ENCODE measurements at regions of chr4 and their contacts with region 1.

Region 1: GRCh38 chr4:94488662-94489061 is 36.9 kb downstream of the PDLIM5 start:
- DNase-seq: peak; percentile 91
- ATAC-seq: peak; percentile 83
- H3K4me3 ChIP-seq: 0 out of 2 replicates have a peak overlapping the region, but pooled peaks have one; percentile 25
- H3K27ac ChIP-seq: peak overlapping the region; percentile 80
- H3K4me1 ChIP-seq: peaks cover 69% of the 10 kb centered on the region
- H3K27me3 ChIP-seq: no peaks in the 10 kb centered on the region
- CTCF ChIP-seq: no peak

Region 2: GRCh38 chr4:93670434-93670833 is 818.2 kb before region 1 on chr4:
- CTCF ChIA-PET with region 1: no interaction called
- POLR2A ChIA-PET with region 1: no interaction called
- intact Hi-C with region 1: no loop called
- DNase-seq: no peak
- ATAC-seq: no peak
- H3K4me3 ChIP-seq: no peak overlapping the region
- H3K27ac ChIP-seq: no peak overlapping the region
- H3K4me1 ChIP-seq: no peaks in the 10 kb centered on the region
- H3K27me3 ChIP-seq: no peaks in the 10 kb centered on the region
- CTCF ChIP-seq: no peak

Region 3: GRCh38 chr4:94290245-94290644 is 198.4 kb before region 1 on chr4:
- CTCF ChIA-PET with region 1: no interaction called
- POLR2A ChIA-PET with region 1: no interaction called
- intact Hi-C with region 1: no loop called
- DNase-seq: no peak
- ATAC-seq: no peak
- H3K4me3 ChIP-seq: no peak overlapping the region
- H3K27ac ChIP-seq: no peak overlapping the region
- H3K4me1 ChIP-seq: no peaks in the 10 kb centered on the region
- H3K27me3 ChIP-seq: no peaks in the 10 kb centered on the region
- CTCF ChIP-seq: peak; percentile 24; the same call in 1 of the 2 replicates

Region 4: GRCh38 chr4:94390804-94391410 is 97.8 kb before region 1 on chr4:
- CTCF ChIA-PET with region 1: no interaction called
- POLR2A ChIA-PET with region 1: no interaction called
- intact Hi-C with region 1: no loop called
- DNase-seq: peak; percentile 44
- ATAC-seq: 0 out of 2 replicates have a peak, but pooled peaks have one; percentile 29
- H3K4me3 ChIP-seq: no peak overlapping the region
- H3K27ac ChIP-seq: no peak overlapping the region
- H3K4me1 ChIP-seq: no peaks in the 10 kb centered on the region
- H3K27me3 ChIP-seq: no peaks in the 10 kb centered on the region
- CTCF ChIP-seq: peak; percentile 75

Region 5: GRCh38 chr4:94406668-94407437 is 81.8 kb before region 1 on chr4:
- CTCF ChIA-PET with region 1: no interaction called
- POLR2A ChIA-PET with region 1: no interaction called
- intact Hi-C with region 1: loop called (anchors 5 kb)
- DNase-seq: peak; percentile 85
- ATAC-seq: peak; percentile 73
- H3K4me3 ChIP-seq: no peak overlapping the region
- H3K27ac ChIP-seq: no peak overlapping the region
- H3K4me1 ChIP-seq: peaks cover 6% of the 10 kb centered on the region
- H3K27me3 ChIP-seq: no peaks in the 10 kb centered on the region
- CTCF ChIP-seq: peak; percentile 83

Region 6: GRCh38 chr4:94472056-94472824 is 16.4 kb before region 1 on chr4:
- CTCF ChIA-PET with region 1: no interaction called
- POLR2A ChIA-PET with region 1: no interaction called
- intact Hi-C with region 1: loop called (anchors 2 kb)
- DNase-seq: peak; percentile 84
- ATAC-seq: peak; percentile 93
- H3K4me3 ChIP-seq: no peak overlapping the region
- H3K27ac ChIP-seq: peak overlapping the region; percentile 50
- H3K4me1 ChIP-seq: peaks cover 31% of the 10 kb centered on the region
- H3K27me3 ChIP-seq: no peaks in the 10 kb centered on the region
- CTCF ChIP-seq: no peak